Thyroid gland (tissue), 4 donors: ENCODE measurements at regions of chr1 and their contacts with region 1.

Region 1: DNA sequence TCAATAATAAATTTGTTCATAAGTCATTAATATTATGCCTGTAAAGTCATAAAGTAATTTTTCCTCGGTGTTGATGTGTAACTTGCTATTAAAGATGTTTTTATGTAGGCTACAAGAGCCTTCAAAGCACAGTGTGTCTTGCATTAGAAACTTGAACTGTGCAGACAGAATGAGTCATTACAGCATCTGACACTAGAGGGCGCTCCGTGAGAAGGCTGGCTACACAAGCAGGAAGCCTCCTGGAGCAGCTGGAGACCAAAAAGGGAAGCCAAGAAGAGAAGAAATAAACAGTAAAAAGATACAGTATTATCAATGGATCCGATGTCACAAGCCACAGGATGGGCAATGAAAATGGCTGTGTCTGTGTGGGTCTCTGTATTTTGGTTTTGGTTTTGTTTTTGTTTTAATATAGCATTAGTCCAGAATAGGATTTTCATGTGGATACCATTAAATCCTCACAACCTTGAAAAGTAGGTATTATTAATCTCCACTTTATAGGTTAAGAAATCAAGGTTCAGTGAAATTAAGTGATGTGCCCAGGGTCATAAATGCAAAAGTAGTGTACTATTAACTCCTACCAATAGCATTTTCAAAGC is 16.1 kb upstream of the LRRC8D start:
- DNase-seq: peak; percentile 86 to 88
- H3K4me3 ChIP-seq: no peak overlapping the region
- H3K27ac ChIP-seq: no peak overlapping the region
- H3K4me1 ChIP-seq: no peaks in the 10 kb centered on the region
- H3K27me3 ChIP-seq: no peaks in the 10 kb centered on the region
- CTCF ChIP-seq: peak; percentile 83 to 94 (median 86)
- POLR2A ChIP-seq: no peak

Region 2: DNA sequence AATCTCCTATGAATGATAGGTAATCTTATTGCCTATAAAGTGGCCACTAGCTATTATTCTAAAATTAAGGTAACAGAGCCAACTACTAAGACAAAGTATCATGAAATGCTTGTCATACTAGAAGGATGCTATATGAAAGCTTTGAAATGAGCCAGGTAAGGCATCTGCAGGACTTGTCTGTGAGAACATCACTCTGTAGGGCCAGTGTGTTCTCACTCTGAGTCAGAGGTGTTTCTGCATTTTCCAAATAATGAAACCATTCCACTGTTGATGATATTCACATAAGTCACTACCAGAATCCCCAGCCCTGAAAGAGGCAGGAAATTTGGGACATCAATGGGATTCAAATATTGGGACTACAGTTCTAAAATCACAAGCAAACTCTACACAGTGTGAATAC is 506.3 kb before region 1 on chr1:
- intact Hi-C with region 1: no loop called
- DNase-seq: no peak
- H3K4me3 ChIP-seq: no peak overlapping the region
- H3K27ac ChIP-seq: no peak overlapping the region
- H3K4me1 ChIP-seq: no peaks in the 10 kb centered on the region
- H3K27me3 ChIP-seq: no peaks in the 10 kb centered on the region
- CTCF ChIP-seq: no peak
- POLR2A ChIP-seq: no peak

Region 3: DNA sequence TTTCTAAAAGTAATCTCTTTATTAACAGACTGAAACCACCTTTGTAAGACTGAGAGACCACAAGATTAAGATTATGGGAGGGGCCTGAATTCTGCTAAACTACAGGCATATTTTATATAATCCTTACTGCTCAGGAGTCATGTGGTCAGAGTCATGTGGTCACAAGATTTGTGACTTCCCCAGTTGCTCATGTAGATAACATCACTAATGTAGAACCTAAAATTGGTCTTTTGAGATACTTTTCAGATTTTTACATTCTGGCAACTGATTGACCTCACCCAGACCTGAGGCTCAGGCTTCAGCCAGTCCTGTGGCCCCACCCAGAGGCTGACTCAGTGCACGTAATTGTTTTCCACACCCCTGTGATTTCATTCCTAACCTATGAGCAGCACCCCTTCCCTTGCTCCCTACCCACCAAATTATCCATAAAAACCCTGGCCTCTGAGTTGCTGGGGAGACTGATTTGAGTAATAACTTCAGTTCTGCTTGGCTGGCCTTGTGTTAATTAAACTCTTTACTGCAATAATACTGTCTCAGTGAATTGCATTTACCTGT is 148.4 kb after region 1 on chr1:
- intact Hi-C with region 1: loop called (anchors 10 kb)
- DNase-seq: peak; percentile 75 to 82
- H3K4me3 ChIP-seq: no peak overlapping the region
- H3K27ac ChIP-seq: peak overlapping the region in 2 of 3 donors; percentile 47 to 91
- H3K4me1 ChIP-seq: peaks cover 19 to 21% of the 10 kb centered on the region in 2 donors
- H3K27me3 ChIP-seq: no peaks in the 10 kb centered on the region
- CTCF ChIP-seq: peak in 4 of 6 experiments; percentile 29 to 64 (median 54)
- POLR2A ChIP-seq: peak in 1 of 2 donors; percentile 45

Region 4: GRCh38 chr1:89987170-89987819 is 182.6 kb after region 1 on chr1:
- intact Hi-C with region 1: loop called (anchors 2 kb)
- DNase-seq: peak; percentile 42 to 46
- H3K4me3 ChIP-seq: no peak overlapping the region
- H3K27ac ChIP-seq: no peak overlapping the region
- H3K4me1 ChIP-seq: peaks cover 6 to 12% of the 10 kb centered on the region in 2 donors
- H3K27me3 ChIP-seq: no peaks in the 10 kb centered on the region
- CTCF ChIP-seq: peak; percentile 59 to 92 (median 83)
- POLR2A ChIP-seq: no peak